A549 (cell line): ENCODE measurements at regions of chr16 and their contacts with region 1.

Region 1: DNA sequence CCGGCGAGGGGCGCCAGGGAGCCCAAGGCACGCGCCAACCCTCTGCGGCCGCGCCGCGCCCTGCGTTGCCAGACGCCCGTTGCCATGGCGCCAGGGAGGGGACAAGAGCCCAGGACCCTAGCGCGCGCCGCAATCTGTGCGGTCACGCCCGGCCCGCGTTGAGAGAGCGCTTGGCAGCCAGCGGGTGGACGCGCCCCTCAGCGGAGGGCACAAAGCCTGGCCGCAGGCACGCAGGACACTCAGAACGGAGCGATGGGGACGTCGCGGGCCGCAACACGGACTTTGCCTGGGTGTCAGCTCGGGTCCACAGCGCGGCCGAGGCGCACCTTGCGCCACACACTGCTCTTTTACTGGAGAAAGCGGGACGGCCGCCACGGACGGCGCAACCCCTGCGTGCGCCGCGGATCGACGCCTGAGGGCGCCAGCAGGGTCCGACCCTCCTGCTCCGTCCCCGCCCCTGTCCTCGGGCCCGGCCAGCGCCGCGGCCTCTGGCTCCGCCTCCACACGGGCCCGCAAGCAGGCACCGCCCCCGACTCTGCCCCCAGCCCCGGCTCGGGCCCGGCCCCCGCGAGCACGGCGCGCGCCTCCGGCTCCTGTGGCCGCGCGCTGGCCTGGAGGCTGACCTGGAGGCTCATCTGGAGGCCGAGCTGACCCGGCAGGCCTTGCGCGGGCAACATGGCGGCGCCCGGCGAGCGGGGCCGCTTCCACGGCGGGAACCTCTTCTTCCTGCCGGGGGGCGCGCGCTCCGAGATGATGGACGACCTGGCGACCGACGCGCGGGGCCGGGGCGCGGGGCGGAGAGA is at the start of gene GFER:
- DNase-seq: peak; percentile 94 to 96
- ATAC-seq: peak; percentile 72 to 85
- H3K4me3 ChIP-seq: peak within 1 kb of the TSS; percentile 67
- H3K27ac ChIP-seq: peak within 1 kb of the TSS; percentile 86 to 94
- H3K4me1 ChIP-seq: peaks cover 37% of the 10 kb centered on the region
- CTCF ChIP-seq: peak; percentile 50; the same call in 2 of the 3 replicates
- EP300 ChIP-seq: no peak
- POLR2A ChIP-seq: peak; percentile 85
- RAD21 ChIP-seq: 0 out of 5 replicates have a peak, but pooled peaks of 1 of the 2 experiments have one; percentile 18
- polyA plus RNA-seq, gene GFER: 11.9 and 12.9 TPM in 2 replicates

Region 2: GRCh38 chr16:1971796-1972489 is 11.8 kb before region 1 on chr16 and contains the start of gene TBL3:
- CTCF ChIA-PET with region 1: interaction called, 4 read pairs
- POLR2A ChIA-PET with region 1: interaction called, 13 read pairs
- DNase-seq: peak; percentile 91 to 95
- ATAC-seq: peak; percentile 85 to 92
- H3K4me3 ChIP-seq: peak within 1 kb of the TSS; percentile 65
- H3K27ac ChIP-seq: peak within 1 kb of the TSS; percentile 98 to 99
- H3K4me1 ChIP-seq: peaks cover 17% of the 10 kb centered on the region
- CTCF ChIP-seq: no peak
- EP300 ChIP-seq: no peak
- POLR2A ChIP-seq: peak; percentile 88
- RAD21 ChIP-seq: no peak
- polyA plus RNA-seq, gene TBL3: 21.9 and 25.9 TPM in 2 replicates

Region 3: GRCh38 chr16:2009789-2010510 is 26.2 kb after region 1 on chr16 and contains the start of gene ZNF598:
- CTCF ChIA-PET with region 1: interaction called, 196 read pairs
- POLR2A ChIA-PET with region 1: interaction called, 3 read pairs
- DNase-seq: peak; percentile 84 to 93
- ATAC-seq: peak; percentile 89 to 90
- H3K4me3 ChIP-seq: peak within 1 kb of the TSS; percentile 94
- H3K27ac ChIP-seq: peak within 1 kb of the TSS; percentile 95 to 98
- H3K4me1 ChIP-seq: peaks cover 53% of the 10 kb centered on the region
- CTCF ChIP-seq: no peak; the same call in 2 of the 3 replicates
- EP300 ChIP-seq: no peak
- POLR2A ChIP-seq: peak; percentile 81
- RAD21 ChIP-seq: no peak
- polyA plus RNA-seq, gene ZNF598: 15.3 and 17.7 TPM in 2 replicates